MCF 10A (cell line): ENCODE measurements at regions of chr22 and their contacts with region 1.

Region 1: GRCh38 chr22:46542011-46542985 is 4.9 kb upstream of the CELSR1 start:
- DNase-seq: peak; percentile 71
- H3K4me3 Mint-ChIP-seq: no peak overlapping the region
- H3K27ac Mint-ChIP-seq: no peak overlapping the region
- H3K4me1 Mint-ChIP-seq: peaks cover 20% of the 10 kb centered on the region
- H3K27me3 Mint-ChIP-seq: no peaks in the 10 kb centered on the region
- CTCF ChIP-seq: peak; percentile 88

Region 2: GRCh38 chr22:46187862-46188261 is 354.4 kb before region 1 on chr22:
- CTCF ChIA-PET with region 1: no interaction called
- POLR2A ChIA-PET with region 1: no interaction called
- intact Hi-C with region 1: no loop called
- DNase-seq: no peak
- H3K4me3 Mint-ChIP-seq: no peak overlapping the region
- H3K27ac Mint-ChIP-seq: no peak overlapping the region
- H3K4me1 Mint-ChIP-seq: no peaks in the 10 kb centered on the region
- H3K27me3 Mint-ChIP-seq: no peaks in the 10 kb centered on the region
- CTCF ChIP-seq: no peak

Region 3: DNA sequence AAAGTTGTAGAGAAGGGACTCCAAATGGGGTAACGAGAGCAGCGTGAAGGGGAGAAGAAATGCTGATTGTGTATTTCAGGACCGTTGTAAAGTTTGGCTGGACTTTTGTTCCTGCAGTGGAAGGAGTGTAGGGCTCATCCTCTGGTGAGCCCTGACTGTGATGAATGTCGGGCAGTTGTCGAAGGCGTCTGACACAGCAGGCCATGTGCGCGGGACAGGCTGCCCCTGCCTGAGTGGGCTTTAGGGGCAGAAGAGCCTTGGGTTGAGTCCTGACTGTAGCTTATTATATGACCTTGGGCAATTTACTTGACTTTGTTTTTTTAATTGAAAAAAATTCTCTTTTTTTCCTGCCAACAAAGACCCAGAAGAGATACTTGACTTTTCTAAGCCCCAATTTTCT is 203.7 kb before region 1 on chr22:
- CTCF ChIA-PET with region 1: interaction called, 13 read pairs
- POLR2A ChIA-PET with region 1: interaction called, 9 read pairs
- intact Hi-C with region 1: no loop called
- DNase-seq: no peak
- H3K4me3 Mint-ChIP-seq: no peak overlapping the region
- H3K27ac Mint-ChIP-seq: no peak overlapping the region
- H3K4me1 Mint-ChIP-seq: peaks cover 14% of the 10 kb centered on the region
- H3K27me3 Mint-ChIP-seq: no peaks in the 10 kb centered on the region
- CTCF ChIP-seq: no peak

Region 4: GRCh38 chr22:46367707-46368191 is 174.5 kb before region 1 on chr22:
- CTCF ChIA-PET with region 1: interaction called, 87 read pairs
- POLR2A ChIA-PET with region 1: interaction called, 21 read pairs
- intact Hi-C with region 1: loop called (anchors 1 kb)
- DNase-seq: peak; percentile 64
- H3K4me3 Mint-ChIP-seq: no peak overlapping the region
- H3K27ac Mint-ChIP-seq: no peak overlapping the region
- H3K4me1 Mint-ChIP-seq: peaks cover 6% of the 10 kb centered on the region
- H3K27me3 Mint-ChIP-seq: no peaks in the 10 kb centered on the region
- CTCF ChIP-seq: peak; percentile 93

Region 5: DNA sequence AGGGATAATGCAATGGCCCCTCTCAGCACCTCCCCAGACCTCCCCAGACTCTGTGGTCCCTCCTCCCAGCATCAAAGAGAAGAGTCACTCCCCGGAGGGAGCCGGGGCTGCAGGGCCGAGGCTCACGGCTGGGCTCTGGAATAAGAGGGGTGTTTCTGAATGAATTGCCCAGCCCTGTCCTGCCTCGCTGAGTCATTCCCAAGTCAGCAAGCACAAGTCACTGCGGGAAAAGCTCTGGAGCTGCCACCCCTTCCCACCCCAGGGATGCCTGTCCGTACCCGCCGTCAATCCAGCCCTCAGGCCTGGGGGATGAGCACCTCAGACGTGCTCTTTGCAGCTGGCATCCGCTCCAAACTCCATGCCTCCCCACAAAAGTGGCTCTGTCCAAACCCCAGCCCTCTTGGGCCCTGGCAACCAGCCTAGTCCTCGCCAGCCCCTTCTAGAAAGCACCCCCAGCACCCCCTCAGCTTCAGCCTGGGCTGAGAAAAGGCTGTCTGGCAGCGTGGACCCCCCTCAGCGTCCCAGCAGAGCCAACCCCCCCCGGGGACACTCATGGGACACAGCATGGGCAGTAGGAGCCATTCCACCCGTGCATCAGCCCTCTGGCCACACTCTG is 27.6 kb before region 1 on chr22:
- CTCF ChIA-PET with region 1: no interaction called
- POLR2A ChIA-PET with region 1: interaction called, 19 read pairs
- intact Hi-C with region 1: no loop called
- DNase-seq: peak; percentile 93
- H3K4me3 Mint-ChIP-seq: peak overlapping the region; percentile 19
- H3K27ac Mint-ChIP-seq: peak overlapping the region; percentile 88
- H3K4me1 Mint-ChIP-seq: peaks cover 23% of the 10 kb centered on the region
- H3K27me3 Mint-ChIP-seq: no peaks in the 10 kb centered on the region
- CTCF ChIP-seq: no peak